Activated B cell treated with CpG ODN at 0.5 μM for 24 hours (primary cell): ENCODE measurements at regions of chr11 and their contacts with region 1.

Region 1: GRCh38 chr11:62805076-62805892 is at the start of gene NXF1:
- DNase-seq: peak; percentile 99
- ATAC-seq: peak; percentile 86
- H3K4me3 Mint-ChIP-seq: peak within 1 kb of the TSS; percentile 96
- H3K27ac Mint-ChIP-seq: peak within 1 kb of the TSS; percentile 93
- H3K4me1 Mint-ChIP-seq: peaks cover 36% of the 10 kb centered on the region
- H3K27me3 Mint-ChIP-seq: no peaks in the 10 kb centered on the region
- CTCF ChIP-seq: no peak
- total RNA-seq, gene NXF1: 89.1 and 91.6 TPM in 2 replicates

Region 2: GRCh38 chr11:61860054-61860903 is 945.0 kb before region 1 on chr11:
- CTCF ChIA-PET with region 1: no interaction called
- POLR2A ChIA-PET with region 1: no interaction called
- intact Hi-C with region 1: no loop called
- DNase-seq: no peak
- ATAC-seq: no peak
- H3K4me3 Mint-ChIP-seq: no peak overlapping the region
- H3K27ac Mint-ChIP-seq: no peak overlapping the region
- H3K4me1 Mint-ChIP-seq: no peaks in the 10 kb centered on the region
- H3K27me3 Mint-ChIP-seq: no peaks in the 10 kb centered on the region
- CTCF ChIP-seq: no peak

Region 3: GRCh38 chr11:62601394-62602140 is 203.7 kb before region 1 on chr11 and contains the start of gene MTA2:
- CTCF ChIA-PET with region 1: no interaction called
- POLR2A ChIA-PET with region 1: interaction called, 11 read pairs
- intact Hi-C with region 1: no loop called
- DNase-seq: peak; percentile 100
- ATAC-seq: peak; percentile 81
- H3K4me3 Mint-ChIP-seq: peak within 1 kb of the TSS; percentile 92
- H3K27ac Mint-ChIP-seq: peak within 1 kb of the TSS; percentile 97
- H3K4me1 Mint-ChIP-seq: peaks cover 45% of the 10 kb centered on the region
- H3K27me3 Mint-ChIP-seq: no peaks in the 10 kb centered on the region
- CTCF ChIP-seq: no peak
- total RNA-seq, gene MTA2: 170 and 175 TPM in 2 replicates

Region 4: GRCh38 chr11:62771144-62772021 is 33.9 kb before region 1 on chr11 and contains the start of gene TAF6L:
- CTCF ChIA-PET with region 1: no interaction called
- POLR2A ChIA-PET with region 1: interaction called, 5 read pairs
- intact Hi-C with region 1: loop called (anchors 1 kb)
- DNase-seq: peak; percentile 81
- ATAC-seq: peak; percentile 88
- H3K4me3 Mint-ChIP-seq: peak within 1 kb of the TSS; percentile 92
- H3K27ac Mint-ChIP-seq: peak within 1 kb of the TSS; percentile 94
- H3K4me1 Mint-ChIP-seq: peaks cover 28% of the 10 kb centered on the region
- H3K27me3 Mint-ChIP-seq: no peaks in the 10 kb centered on the region
- CTCF ChIP-seq: no peak
- total RNA-seq, gene TAF6L: 32.9 and 38.6 TPM in 2 replicates

Region 5: GRCh38 chr11:62787005-62787759 is 18.1 kb before region 1 on chr11 and contains the start of gene TMEM179B:
- CTCF ChIA-PET with region 1: interaction called, 11 read pairs
- POLR2A ChIA-PET with region 1: interaction called, 31 read pairs
- intact Hi-C with region 1: loop called (anchors 1 kb)
- DNase-seq: peak; percentile 87
- ATAC-seq: peak; percentile 71
- H3K4me3 Mint-ChIP-seq: peak within 1 kb of the TSS; percentile 92
- H3K27ac Mint-ChIP-seq: peak within 1 kb of the TSS; percentile 89
- H3K4me1 Mint-ChIP-seq: peaks cover 42% of the 10 kb centered on the region
- H3K27me3 Mint-ChIP-seq: no peaks in the 10 kb centered on the region
- CTCF ChIP-seq: peak; percentile 66
- total RNA-seq, gene TMEM179B: 34.9 and 47.7 TPM in 2 replicates

Region 6: GRCh38 chr11:62794201-62794775 is 11.0 kb before region 1 on chr11:
- CTCF ChIA-PET with region 1: interaction called, 3 read pairs
- POLR2A ChIA-PET with region 1: interaction called, 16 read pairs
- intact Hi-C with region 1: loop called (anchors 1 kb)
- DNase-seq: no peak
- ATAC-seq: no peak
- H3K4me3 Mint-ChIP-seq: no peak overlapping the region
- H3K27ac Mint-ChIP-seq: peak overlapping the region; percentile 11
- H3K4me1 Mint-ChIP-seq: peaks cover 27% of the 10 kb centered on the region
- H3K27me3 Mint-ChIP-seq: no peaks in the 10 kb centered on the region
- CTCF ChIP-seq: no peak

Region 7: DNA sequence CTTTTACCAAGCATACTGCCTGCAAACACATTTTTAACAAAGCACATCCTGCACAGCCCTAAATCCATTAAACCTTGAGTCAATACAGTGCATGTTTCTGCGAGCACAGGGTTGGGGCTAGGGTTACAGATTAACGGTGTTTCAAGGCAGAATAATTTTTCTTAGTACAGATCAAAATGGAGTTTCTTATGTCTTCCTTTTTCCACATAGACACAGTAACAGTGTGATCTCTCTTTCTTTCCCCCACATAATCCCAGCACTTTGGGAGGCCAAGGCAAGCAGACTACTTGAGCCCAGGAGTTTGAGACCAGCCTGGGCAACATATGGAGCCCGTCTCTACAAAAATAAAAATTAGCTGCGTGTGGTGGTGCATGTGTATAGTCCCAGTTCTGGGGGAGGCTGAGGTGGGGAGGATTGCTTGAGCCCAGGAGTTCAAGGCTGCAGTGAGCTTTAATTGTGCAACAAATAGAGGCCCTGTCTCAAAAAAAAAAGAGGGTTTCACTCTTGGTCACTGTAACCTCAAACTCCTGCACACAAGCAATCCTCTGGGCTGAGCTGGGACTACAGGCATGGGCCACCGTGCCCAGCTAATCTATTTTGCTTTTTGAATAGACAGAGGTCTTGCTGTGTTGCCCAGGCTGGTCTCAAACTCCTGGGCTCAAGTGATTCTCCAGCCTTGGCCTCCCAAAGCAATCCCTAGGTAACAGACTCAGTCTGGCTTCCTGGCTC is 55.7 kb after region 1 on chr11:
- CTCF ChIA-PET with region 1: no interaction called
- POLR2A ChIA-PET with region 1: interaction called, 15 read pairs
- intact Hi-C with region 1: loop called (anchors 1 kb)
- DNase-seq: no peak
- ATAC-seq: no peak
- H3K4me3 Mint-ChIP-seq: no peak overlapping the region
- H3K27ac Mint-ChIP-seq: no peak overlapping the region
- H3K4me1 Mint-ChIP-seq: peaks cover 24% of the 10 kb centered on the region
- H3K27me3 Mint-ChIP-seq: no peaks in the 10 kb centered on the region
- CTCF ChIP-seq: no peak